ENCODE measurements at regions of chr18 and their contacts with region 1.

Region 1: GRCh38 chr18:23981369-23981980 is 33.1 kb upstream of the TTC39C start:
- DNase-seq: peak; percentile 28
- ATAC-seq: peak; percentile 96
- H3K4me3 Mint-ChIP-seq: peak overlapping the region; percentile 13
- H3K27ac Mint-ChIP-seq: no peak overlapping the region
- H3K4me1 Mint-ChIP-seq: peaks cover 36% of the 10 kb centered on the region
- H3K27me3 Mint-ChIP-seq: no peaks in the 10 kb centered on the region
- CTCF ChIP-seq: no peak

Region 2: DNA sequence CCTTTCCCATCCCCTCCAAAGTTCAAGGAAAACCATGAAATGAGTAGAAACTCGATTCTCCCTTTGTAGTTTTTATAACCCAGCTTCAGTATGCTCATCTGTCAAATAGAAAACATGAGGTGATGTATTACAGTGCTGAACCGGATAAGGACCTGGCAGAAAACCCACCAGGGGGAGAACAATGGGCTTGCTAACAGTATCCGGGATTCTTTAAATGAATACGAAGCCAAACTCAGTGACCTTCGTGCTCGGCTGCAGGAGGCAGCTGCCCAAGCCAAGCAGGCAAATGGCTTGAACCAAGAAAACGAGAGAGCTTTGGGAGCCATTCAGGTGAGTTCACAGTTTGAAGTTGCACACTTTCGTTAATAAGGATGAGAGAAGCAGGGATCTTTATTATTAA is 80.5 kb before region 1 on chr18:
- CTCF ChIA-PET with region 1: no interaction called
- POLR2A ChIA-PET with region 1: no interaction called
- intact Hi-C with region 1: no loop called
- DNase-seq: no peak
- ATAC-seq: no peak
- H3K4me3 Mint-ChIP-seq: no peak overlapping the region
- H3K27ac Mint-ChIP-seq: no peak overlapping the region
- H3K4me1 Mint-ChIP-seq: no peaks in the 10 kb centered on the region
- H3K27me3 Mint-ChIP-seq: no peaks in the 10 kb centered on the region
- CTCF ChIP-seq: no peak

Region 3: DNA sequence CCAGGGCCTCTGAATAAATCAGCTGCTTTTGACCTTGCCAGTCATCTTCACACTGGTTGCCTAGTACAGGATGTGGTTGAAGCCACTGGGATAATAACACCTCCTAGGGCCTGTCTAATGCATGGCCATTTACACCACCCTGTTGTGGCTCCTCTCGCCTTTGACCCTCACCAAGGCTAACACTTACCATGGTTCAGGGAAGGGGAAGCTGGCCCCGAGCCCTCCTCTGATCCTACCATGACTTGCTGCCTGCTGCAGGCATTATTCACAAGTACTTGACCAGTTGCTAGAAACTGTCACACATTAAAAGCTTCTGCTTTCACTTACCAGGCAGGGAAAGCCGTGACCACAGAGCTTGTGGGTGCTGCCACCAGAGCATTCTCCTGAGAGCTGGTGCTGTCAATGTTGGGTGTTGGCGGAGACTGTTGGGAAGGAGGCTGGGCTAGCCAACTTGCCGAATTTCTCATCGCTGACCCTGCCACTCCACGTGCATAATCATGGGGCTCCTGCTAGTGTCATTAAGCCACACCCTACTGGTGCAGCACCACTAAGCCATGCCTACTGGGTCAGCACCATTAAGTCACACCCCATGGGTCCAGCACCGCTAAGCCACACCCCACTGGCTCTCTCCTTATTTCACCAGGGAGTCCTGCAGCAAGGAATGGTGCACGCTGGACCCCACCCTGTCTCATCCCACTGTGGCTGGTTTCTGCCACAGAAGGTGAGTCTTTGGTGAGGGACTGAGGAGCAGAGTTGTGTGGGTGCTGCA is 14.0 kb before region 1 on chr18:
- CTCF ChIA-PET with region 1: interaction called, 3 read pairs
- POLR2A ChIA-PET with region 1: interaction called, 5 read pairs
- intact Hi-C with region 1: loop called (anchors 1 kb)
- DNase-seq: peak; percentile 28
- ATAC-seq: peak; percentile 55
- H3K4me3 Mint-ChIP-seq: peak overlapping the region; percentile 62
- H3K27ac Mint-ChIP-seq: peak overlapping the region; percentile 79
- H3K4me1 Mint-ChIP-seq: peaks cover 83% of the 10 kb centered on the region
- H3K27me3 Mint-ChIP-seq: no peaks in the 10 kb centered on the region
- CTCF ChIP-seq: no peak

Region 4: DNA sequence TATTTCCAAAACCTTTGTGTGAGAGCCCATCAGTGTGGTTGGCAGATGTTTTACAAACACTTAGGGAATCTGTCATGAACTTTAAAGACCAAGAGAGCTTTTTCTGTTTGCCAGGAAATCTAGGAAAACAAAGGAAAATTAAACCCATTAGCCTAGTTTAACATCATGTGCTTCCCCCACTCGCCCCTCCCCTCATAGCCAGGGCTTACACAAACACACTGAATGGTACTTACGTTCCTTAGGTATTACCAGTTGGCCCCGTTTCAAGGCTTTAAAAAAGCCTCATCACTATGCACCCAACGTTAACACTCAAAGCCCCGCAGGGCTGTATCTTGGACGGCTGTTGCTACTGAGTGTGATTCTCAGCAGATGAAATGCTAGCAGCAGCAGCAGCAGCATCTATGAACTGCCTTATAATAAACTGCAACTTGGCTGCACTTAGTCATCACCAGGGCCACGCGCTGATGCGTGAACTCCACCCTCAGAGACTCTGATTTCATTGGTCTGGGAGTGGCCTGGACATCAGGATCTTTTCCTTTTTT is 13.0 kb after region 1 on chr18:
- CTCF ChIA-PET with region 1: no interaction called
- POLR2A ChIA-PET with region 1: no interaction called
- intact Hi-C with region 1: no loop called
- DNase-seq: no peak
- ATAC-seq: no peak
- H3K4me3 Mint-ChIP-seq: no peak overlapping the region
- H3K27ac Mint-ChIP-seq: no peak overlapping the region
- H3K4me1 Mint-ChIP-seq: peaks cover 8% of the 10 kb centered on the region
- H3K27me3 Mint-ChIP-seq: peaks cover 2% of the 10 kb centered on the region
- CTCF ChIP-seq: no peak

Region 5: DNA sequence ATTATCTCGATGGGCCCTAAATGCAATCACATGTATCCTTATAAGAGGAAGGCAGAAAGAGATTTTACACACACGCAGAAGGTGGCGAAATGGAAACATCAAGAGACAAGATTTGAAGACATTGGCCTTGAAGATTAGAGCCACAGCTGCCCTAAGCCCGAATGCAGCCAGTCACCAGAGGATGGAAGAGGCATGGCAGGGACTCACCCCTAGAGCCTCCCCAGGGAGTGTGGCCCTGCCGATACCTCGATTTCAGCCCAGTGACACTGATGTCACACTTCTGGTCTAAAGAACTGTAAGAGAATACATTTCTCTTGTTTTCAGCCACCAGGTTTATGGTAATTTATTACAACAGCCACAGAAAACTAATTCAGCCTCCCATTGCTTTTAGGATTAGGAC is 50.4 kb after region 1 on chr18:
- CTCF ChIA-PET with region 1: no interaction called
- POLR2A ChIA-PET with region 1: no interaction called
- intact Hi-C with region 1: no loop called
- DNase-seq: no peak
- ATAC-seq: peak; percentile 85
- H3K4me3 Mint-ChIP-seq: no peak overlapping the region
- H3K27ac Mint-ChIP-seq: no peak overlapping the region
- H3K4me1 Mint-ChIP-seq: peaks cover 47% of the 10 kb centered on the region
- H3K27me3 Mint-ChIP-seq: no peaks in the 10 kb centered on the region
- CTCF ChIP-seq: no peak

Measured in activated B cell treated with CpG ODN at 0.5 μM for 24 hours (primary cell).